ENCODE measurements at regions of chr6 and their contacts with region 1.

Region 1: DNA sequence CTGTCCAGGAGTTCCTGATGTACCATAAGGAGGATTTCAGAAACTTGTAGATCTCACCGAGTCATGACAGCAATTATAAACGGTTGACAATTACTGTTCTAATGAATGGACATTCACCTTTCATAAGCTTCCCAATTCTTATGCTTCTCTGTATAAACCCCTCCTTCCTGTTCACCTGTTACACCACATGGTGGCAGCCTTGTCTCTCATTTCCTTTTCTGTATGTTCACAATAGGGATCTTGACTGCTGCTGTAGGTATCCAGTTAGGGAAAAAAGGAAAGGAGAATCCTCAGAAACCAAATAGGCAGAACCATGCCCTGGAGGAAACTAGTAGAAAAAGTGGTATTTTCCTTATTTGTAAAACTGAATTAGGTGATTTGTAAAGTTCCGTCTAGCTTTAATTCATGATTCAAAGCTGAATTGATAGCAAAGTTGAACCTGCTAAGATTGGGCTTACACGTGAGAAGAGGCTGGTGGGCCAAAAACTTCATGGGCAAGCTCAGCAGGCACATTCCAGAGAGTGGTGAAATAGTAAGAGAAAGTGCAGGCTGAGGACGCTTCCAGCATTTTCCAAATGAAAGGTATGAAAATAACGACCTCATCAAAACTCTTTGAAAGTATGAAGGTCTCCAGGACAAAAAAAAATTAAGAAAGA is 29.0 kb upstream of the TBPL1 start:
- DNase-seq: peak; percentile 77
- ATAC-seq: peak; percentile 88
- H3K4me3 ChIP-seq: no peak overlapping the region
- H3K4me3 Mint-ChIP-seq: no peak overlapping the region
- H3K27ac ChIP-seq: no peak overlapping the region
- H3K27ac Mint-ChIP-seq: no peak overlapping the region
- H3K4me1 ChIP-seq: no peaks in the 10 kb centered on the region
- H3K4me1 Mint-ChIP-seq: no peaks in the 10 kb centered on the region
- H3K27me3 ChIP-seq: peaks cover 0 to 18% (median 4%) of the 10 kb centered on the region in 4 experiments
- H3K27me3 Mint-ChIP-seq: peaks cover 33% of the 10 kb centered on the region
- CTCF ChIP-seq: peak; percentile 90

Region 2: GRCh38 chr6:133945158-133945557 is 21.1 kb after region 1 on chr6:
- CTCF ChIA-PET with region 1: interaction called, 15 read pairs
- POLR2A ChIA-PET with region 1: no interaction called
- intact Hi-C with region 1: no loop called
- DNase-seq: no peak
- ATAC-seq: no peak
- H3K4me3 ChIP-seq: no peak overlapping the region
- H3K4me3 Mint-ChIP-seq: no peak overlapping the region
- H3K27ac ChIP-seq: no peak overlapping the region
- H3K27ac Mint-ChIP-seq: no peak overlapping the region
- H3K4me1 ChIP-seq: no peaks in the 10 kb centered on the region
- H3K4me1 Mint-ChIP-seq: no peaks in the 10 kb centered on the region
- H3K27me3 ChIP-seq: peaks cover 0 to 9% (median 1%) of the 10 kb centered on the region in 4 experiments
- H3K27me3 Mint-ChIP-seq: peaks cover 14% of the 10 kb centered on the region
- CTCF ChIP-seq: no peak

Region 3: GRCh38 chr6:133966654-133967329 is 42.7 kb after region 1 on chr6:
- CTCF ChIA-PET with region 1: interaction called, 12 read pairs
- POLR2A ChIA-PET with region 1: no interaction called
- intact Hi-C with region 1: no loop called
- DNase-seq: peak; percentile 60
- ATAC-seq: peak; percentile 87
- H3K4me3 ChIP-seq: peak overlapping the region in 1 of 5 experiments; percentile 38
- H3K4me3 Mint-ChIP-seq: peak overlapping the region; percentile 58
- H3K27ac ChIP-seq: peak overlapping the region; percentile 14 to 50
- H3K27ac Mint-ChIP-seq: peak overlapping the region; percentile 70
- H3K4me1 ChIP-seq: peaks cover 19 to 27% of the 10 kb centered on the region in 2 donors
- H3K4me1 Mint-ChIP-seq: peaks cover 50% of the 10 kb centered on the region
- H3K27me3 ChIP-seq: no peaks in the 10 kb centered on the region
- H3K27me3 Mint-ChIP-seq: no peaks in the 10 kb centered on the region
- CTCF ChIP-seq: no peak

Region 4: GRCh38 chr6:134022650-134023049 is 98.6 kb after region 1 on chr6:
- CTCF ChIA-PET with region 1: interaction called, 14 read pairs
- POLR2A ChIA-PET with region 1: no interaction called
- intact Hi-C with region 1: no loop called
- DNase-seq: no peak
- ATAC-seq: no peak
- H3K4me3 ChIP-seq: no peak overlapping the region
- H3K4me3 Mint-ChIP-seq: no peak overlapping the region
- H3K27ac ChIP-seq: no peak overlapping the region
- H3K27ac Mint-ChIP-seq: no peak overlapping the region
- H3K4me1 ChIP-seq: peaks cover 6 to 9% of the 10 kb centered on the region in 2 donors
- H3K4me1 Mint-ChIP-seq: peaks cover 12% of the 10 kb centered on the region
- H3K27me3 ChIP-seq: peaks cover 0 to 2% (median 0%) of the 10 kb centered on the region in 4 experiments
- H3K27me3 Mint-ChIP-seq: peaks cover 9% of the 10 kb centered on the region
- CTCF ChIP-seq: no peak

Region 5: DNA sequence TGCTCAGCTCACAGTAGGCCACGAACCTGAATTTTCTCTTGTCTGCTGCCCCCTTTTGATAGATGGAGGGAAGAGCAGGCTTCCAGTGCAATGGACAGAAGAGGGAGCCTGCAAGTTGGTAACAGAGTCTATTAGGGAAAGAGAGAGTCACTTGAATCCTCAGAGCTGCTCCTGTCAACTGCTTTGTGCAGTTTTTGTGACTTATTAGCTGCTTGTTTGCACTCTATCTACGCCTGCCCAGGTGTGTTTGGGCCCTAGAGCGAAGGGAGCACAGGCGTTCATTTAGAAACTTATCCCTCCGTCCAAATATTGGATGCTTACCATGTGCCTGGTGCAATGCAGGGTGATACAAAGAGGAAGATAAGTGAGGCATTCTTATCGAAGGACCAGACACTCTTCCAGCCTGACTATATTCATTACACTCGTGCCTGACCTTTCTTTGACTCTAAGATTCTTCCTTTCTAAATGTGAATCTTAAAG is 139.9 kb after region 1 on chr6:
- CTCF ChIA-PET with region 1: interaction called, 183 read pairs
- POLR2A ChIA-PET with region 1: no interaction called
- intact Hi-C with region 1: loop called (anchors 1 kb)
- DNase-seq: peak; percentile 75
- ATAC-seq: peak; percentile 96
- H3K4me3 ChIP-seq: no peak overlapping the region
- H3K4me3 Mint-ChIP-seq: no peak overlapping the region
- H3K27ac ChIP-seq: no peak overlapping the region
- H3K27ac Mint-ChIP-seq: no peak overlapping the region
- H3K4me1 ChIP-seq: no peaks in the 10 kb centered on the region
- H3K4me1 Mint-ChIP-seq: no peaks in the 10 kb centered on the region
- H3K27me3 ChIP-seq: no peaks in the 10 kb centered on the region
- H3K27me3 Mint-ChIP-seq: no peaks in the 10 kb centered on the region
- CTCF ChIP-seq: peak; percentile 77

Region 6: DNA sequence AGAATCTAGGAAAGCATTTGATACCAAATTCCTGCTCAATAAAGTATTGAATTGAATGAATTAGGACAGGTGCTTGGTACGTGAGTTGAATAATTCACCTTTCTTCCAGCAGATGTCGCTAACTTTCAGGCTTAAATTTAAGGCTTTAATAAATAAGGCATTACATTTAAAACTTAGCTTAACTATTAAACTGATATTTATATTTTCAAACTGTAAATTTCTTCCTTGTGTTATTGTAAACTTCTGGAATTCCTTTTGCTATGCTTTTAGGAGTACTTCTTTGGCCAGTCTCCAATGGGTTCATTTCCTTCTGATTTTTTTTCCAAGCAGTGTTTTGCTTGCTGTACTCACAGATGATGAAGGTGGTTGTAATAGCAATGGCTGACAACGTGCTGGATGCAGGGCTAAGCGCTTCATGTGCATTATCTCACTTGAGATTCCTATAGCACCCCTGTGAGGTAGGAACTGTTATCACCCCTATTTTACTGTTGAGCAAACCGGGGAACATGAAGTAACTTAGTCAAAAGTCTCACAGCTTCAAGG is 199.7 kb after region 1 on chr6:
- CTCF ChIA-PET with region 1: interaction called, 11 read pairs
- POLR2A ChIA-PET with region 1: no interaction called
- intact Hi-C with region 1: no loop called
- DNase-seq: peak; percentile 63
- ATAC-seq: peak; percentile 58
- H3K4me3 ChIP-seq: no peak overlapping the region
- H3K4me3 Mint-ChIP-seq: no peak overlapping the region
- H3K27ac ChIP-seq: no peak overlapping the region
- H3K27ac Mint-ChIP-seq: no peak overlapping the region
- H3K4me1 ChIP-seq: no peaks in the 10 kb centered on the region
- H3K4me1 Mint-ChIP-seq: no peaks in the 10 kb centered on the region
- H3K27me3 ChIP-seq: no peaks in the 10 kb centered on the region
- H3K27me3 Mint-ChIP-seq: no peaks in the 10 kb centered on the region
- CTCF ChIP-seq: peak; percentile 90